Heart left ventricle (tissue), 16 donors: ENCODE measurements at regions of chr2 and their contacts with region 1.

Region 1: DNA sequence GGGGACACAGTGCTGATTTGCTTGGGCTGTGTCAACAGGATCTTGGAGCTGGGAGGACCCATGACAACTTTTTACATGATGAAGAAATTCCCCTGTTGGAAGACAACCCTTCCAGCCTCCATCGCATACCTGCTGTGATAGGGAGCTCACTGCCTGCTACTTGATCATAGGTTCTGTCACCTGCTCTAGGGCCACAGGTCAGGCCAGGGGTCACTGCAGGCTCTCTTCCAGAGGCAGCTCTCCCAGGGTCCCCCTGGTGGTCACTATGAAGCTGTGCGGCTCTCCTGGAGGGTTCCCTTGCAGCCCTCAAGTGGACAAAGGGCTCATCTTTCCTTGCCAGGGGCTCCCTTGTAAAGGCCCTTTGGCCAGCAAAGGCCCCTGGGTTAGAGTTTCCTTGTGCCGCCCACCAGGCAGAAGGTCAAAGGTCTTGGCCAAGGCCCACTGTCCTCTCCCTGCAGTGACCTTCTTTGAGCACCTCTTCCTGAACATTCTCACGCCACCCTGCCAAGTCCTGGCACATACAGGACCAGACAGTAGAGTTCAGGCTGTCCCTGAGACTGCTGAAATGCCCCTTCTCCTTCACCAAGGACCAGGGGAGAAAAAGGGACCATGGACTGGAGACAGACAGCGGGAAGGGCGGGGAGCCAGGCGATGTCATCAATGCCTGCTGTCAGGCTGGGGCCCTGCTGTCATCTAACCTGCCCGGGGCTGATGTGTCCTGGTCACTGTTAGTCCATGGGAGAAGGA is 345.1 kb downstream of the DYSF start:
- DNase-seq: peak in 2 of 5 donors; percentile 22 to 33
- ATAC-seq: peak in 3 of 4 donors; percentile 35 to 65 (median 56)
- H3K4me3 ChIP-seq: no peak overlapping the region
- H3K27ac ChIP-seq: no peak overlapping the region
- H3K4me1 ChIP-seq: peaks cover 0 to 19% (median 1%) of the 10 kb centered on the region in 12 donors
- H3K27me3 ChIP-seq: no peaks in the 10 kb centered on the region
- CTCF ChIP-seq: peak; percentile 67 to 84 (median 74)
- POLR2A ChIP-seq: no peak

Region 2: DNA sequence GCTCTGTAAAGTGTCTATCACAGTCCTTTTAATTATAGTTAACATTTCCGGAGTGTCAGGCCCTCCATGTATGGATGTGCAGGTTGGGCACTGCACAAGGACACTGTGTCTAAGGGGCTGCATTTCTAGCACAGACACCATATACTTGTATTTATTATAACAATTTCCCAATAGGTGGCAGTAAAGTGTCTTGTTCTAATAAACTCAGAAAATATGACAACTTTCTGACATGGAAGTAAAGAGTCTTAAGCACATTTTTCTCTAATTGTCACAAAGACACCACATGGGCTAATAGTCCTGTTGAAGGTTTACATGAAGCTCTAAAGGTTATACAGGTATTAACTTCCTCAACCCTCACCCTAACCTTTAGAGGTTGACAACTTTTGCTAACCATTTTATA is 188.5 kb before region 1 on chr2:
- intact Hi-C with region 1: loop called (anchors 2 to 5 kb)
- DNase-seq: peak in 1 of 5 donors; percentile 7
- ATAC-seq: peak in 1 of 4 donors; percentile 15
- H3K4me3 ChIP-seq: no peak overlapping the region
- H3K27ac ChIP-seq: no peak overlapping the region
- H3K4me1 ChIP-seq: peaks cover 8 to 44% (median 19%) of the 10 kb centered on the region in 12 donors
- H3K27me3 ChIP-seq: no peaks in the 10 kb centered on the region
- CTCF ChIP-seq: peak in 10 of 12 donors; percentile 18 to 61 (median 40)
- POLR2A ChIP-seq: no peak

Region 3: DNA sequence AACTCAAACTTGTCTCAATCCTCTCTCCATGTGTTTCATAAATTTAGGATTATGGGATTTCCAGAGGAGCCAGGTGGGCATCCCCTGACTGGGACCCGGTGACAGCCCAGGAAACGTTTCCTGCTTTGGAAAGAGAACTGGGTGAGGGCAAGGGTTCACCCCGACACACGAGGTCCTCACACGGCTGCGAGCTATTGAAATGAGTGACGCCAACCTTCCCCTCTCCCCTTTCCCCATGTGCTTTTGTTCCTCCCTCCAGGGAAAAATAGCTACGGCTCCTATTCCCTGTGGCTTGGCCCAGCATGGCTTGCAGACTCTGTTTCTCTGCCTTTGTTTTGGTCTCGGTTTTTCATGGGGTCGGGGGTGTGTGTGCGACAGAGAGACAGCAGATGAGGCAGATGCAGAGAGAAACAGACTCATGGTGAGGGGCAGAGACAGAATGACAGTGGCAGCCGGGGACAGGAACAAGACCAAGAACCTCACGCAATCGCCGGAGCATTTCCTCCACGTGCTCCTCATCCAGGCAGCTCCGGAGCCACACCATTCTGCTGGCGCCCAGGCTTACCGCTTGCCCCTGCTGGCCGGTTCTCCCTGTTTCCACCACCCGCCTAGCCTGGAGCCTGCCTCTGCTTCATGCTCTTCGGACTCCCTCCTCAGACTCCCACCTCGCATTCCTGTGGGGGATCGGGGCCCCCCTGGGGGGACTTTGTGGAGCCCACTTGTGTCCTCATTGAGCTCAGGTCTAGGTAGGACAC is 106.5 kb before region 1 on chr2:
- intact Hi-C with region 1: loop called in 8 of 10 experiments (anchors 5 to 10 kb)
- DNase-seq: peak in 1 of 5 donors; percentile 25
- ATAC-seq: peak in 1 of 4 donors; percentile 34
- H3K4me3 ChIP-seq: no peak overlapping the region
- H3K27ac ChIP-seq: no peak overlapping the region
- H3K4me1 ChIP-seq: peaks cover 0 to 20% (median 2%) of the 10 kb centered on the region in 12 donors
- H3K27me3 ChIP-seq: no peaks in the 10 kb centered on the region
- CTCF ChIP-seq: no peak
- POLR2A ChIP-seq: no peak

Region 4: DNA sequence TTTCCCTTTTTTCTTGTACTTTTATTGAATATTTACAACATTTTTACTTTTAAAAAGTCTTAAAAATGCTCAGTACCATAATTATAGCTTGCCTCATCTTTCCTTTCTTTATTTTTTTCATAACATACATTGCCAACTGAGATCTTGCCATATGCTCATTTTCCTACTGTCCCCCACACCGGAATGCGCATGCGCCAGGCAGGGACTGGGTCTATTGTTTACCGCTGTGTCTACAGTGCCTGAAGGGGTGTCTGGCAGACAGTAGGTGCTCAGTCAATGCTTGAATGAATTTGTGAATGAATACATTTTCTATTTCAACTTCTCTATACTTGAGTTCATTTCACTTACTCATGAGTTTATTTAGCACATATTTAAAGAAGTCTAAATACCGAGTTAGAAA is 191.2 kb after region 1 on chr2:
- intact Hi-C with region 1: loop called in 7 of 10 experiments (anchors 5 to 10 kb)
- DNase-seq: no peak
- ATAC-seq: no peak
- H3K4me3 ChIP-seq: no peak overlapping the region
- H3K27ac ChIP-seq: no peak overlapping the region
- H3K4me1 ChIP-seq: no peaks in the 10 kb centered on the region
- H3K27me3 ChIP-seq: no peaks in the 10 kb centered on the region
- CTCF ChIP-seq: no peak
- POLR2A ChIP-seq: no peak

Region 5: DNA sequence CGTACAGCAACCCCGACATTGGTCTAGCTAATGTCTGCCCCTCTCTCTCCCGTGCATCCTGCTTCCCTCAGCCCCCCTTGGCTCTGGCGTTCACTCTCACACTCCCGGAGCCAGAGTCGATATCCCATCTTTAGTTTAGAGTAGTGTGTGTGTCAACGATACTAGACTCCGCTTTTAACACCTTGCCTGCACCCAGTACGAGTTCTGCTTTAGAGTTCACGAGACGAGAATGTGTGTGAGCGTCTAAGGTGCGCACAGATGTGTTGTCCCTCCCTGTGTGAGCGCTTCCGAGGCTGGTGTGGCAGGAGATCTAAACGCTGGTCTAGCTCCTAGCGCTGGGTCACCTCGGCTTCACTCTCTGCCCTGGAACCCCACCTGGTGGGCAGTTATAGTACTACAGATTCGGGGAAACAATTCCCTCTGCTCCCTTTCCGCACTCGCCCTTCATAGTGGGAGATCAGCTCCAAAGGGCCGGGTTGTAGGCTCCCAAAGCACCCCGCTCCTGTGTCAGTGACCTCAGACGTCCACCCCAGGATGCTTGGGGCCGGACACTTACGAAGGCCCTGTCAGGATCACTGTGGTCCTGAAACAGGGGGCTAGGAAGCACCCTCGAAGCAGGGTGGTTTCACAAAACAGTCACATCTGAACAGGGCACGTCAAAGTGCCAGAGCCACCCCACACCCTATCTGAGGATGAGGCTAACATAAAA is 351.9 kb after region 1 on chr2:
- intact Hi-C with region 1: loop called in 8 of 10 experiments (anchors 1 to 5 kb)
- DNase-seq: peak; percentile 73 to 80 (median 76)
- ATAC-seq: peak; percentile 75 to 86 (median 80)
- H3K4me3 ChIP-seq: peak overlapping the region in 9 of 12 donors; percentile 48 to 65 (median 56)
- H3K27ac ChIP-seq: no peak overlapping the region
- H3K4me1 ChIP-seq: peaks cover 7 to 49% (median 41%) of the 10 kb centered on the region in 12 donors
- H3K27me3 ChIP-seq: peaks cover 15 to 76% (median 48%) of the 10 kb centered on the region in 9 donors
- CTCF ChIP-seq: peak; percentile 61 to 89 (median 85)
- POLR2A ChIP-seq: no peak